Activated CD8-positive, alpha-beta memory T cell treated with anti-CD3 and anti-CD28 coated beads, Interleukin-2, amount 10 ng/mL, durations not matched to agents 7 days and 5 days (primary cell): ENCODE measurements at regions of chr2 and their contacts with region 1.

Region 1: DNA sequence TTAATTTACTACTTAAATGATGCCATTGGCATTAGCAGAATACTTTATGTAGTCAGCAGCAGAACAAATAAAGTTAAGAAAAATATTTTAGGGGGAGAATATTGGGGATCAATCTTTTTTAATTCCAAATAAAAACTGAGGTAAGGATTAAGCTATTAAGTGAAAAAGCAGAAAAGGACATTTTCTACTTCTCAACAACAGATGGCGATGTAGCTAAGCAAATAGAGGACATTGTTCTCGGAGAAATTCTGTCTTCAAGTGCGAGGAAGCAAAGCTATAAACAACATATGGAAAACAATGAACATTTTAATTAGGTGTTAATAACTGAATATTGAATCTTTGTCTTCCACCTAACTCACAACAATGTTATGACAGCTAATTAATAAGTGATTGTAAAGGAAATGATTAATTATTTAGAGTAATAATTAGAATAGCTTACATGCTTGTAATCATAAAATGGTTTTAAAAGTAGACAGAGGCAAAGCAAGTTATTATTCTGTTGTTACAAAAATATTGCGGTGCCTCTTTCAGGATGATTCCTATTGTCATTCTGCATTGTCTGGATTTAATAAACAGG is 32.9 kb upstream of the CCDC93 start:
- DNase-seq: no peak
- ATAC-seq: no peak
- H3K4me3 Mint-ChIP-seq: no peak overlapping the region
- H3K27ac Mint-ChIP-seq: no peak overlapping the region
- H3K4me1 Mint-ChIP-seq: peaks cover 11% of the 10 kb centered on the region
- H3K27me3 Mint-ChIP-seq: peaks cover 45% of the 10 kb centered on the region

Region 2: DNA sequence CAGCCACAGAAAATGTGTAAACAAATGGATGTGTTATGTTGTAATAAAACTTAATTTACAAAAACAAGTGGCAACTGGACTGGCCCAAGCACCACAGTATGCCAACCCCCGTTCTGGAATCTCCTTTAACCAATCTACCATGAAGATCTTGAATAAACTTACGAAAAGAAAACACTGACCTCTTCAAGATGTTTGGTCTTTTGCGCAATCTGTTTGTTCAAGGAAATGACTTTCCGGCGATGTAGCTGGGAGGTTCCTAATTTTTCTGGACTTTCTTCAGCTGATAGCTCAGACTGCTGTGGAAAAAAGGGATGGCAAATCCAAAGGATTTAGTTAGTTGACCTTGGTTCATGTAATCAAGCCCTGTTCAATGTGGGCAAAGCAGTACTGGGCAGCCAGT is 88.5 kb before region 1 on chr2:
- CTCF ChIA-PET with region 1: no interaction called
- DNase-seq: no peak
- ATAC-seq: no peak
- H3K4me3 Mint-ChIP-seq: no peak overlapping the region
- H3K27ac Mint-ChIP-seq: no peak overlapping the region
- H3K4me1 Mint-ChIP-seq: no peaks in the 10 kb centered on the region
- H3K27me3 Mint-ChIP-seq: no peaks in the 10 kb centered on the region

Region 3: GRCh38 chr2:118032169-118033013 is 14.3 kb before region 1 on chr2:
- CTCF ChIA-PET with region 1: interaction called, 13 read pairs
- DNase-seq: peak; percentile 62
- ATAC-seq: peak; percentile 67
- H3K4me3 Mint-ChIP-seq: no peak overlapping the region
- H3K27ac Mint-ChIP-seq: no peak overlapping the region
- H3K4me1 Mint-ChIP-seq: peaks cover 2% of the 10 kb centered on the region
- H3K27me3 Mint-ChIP-seq: peaks cover 60% of the 10 kb centered on the region

Region 4: DNA sequence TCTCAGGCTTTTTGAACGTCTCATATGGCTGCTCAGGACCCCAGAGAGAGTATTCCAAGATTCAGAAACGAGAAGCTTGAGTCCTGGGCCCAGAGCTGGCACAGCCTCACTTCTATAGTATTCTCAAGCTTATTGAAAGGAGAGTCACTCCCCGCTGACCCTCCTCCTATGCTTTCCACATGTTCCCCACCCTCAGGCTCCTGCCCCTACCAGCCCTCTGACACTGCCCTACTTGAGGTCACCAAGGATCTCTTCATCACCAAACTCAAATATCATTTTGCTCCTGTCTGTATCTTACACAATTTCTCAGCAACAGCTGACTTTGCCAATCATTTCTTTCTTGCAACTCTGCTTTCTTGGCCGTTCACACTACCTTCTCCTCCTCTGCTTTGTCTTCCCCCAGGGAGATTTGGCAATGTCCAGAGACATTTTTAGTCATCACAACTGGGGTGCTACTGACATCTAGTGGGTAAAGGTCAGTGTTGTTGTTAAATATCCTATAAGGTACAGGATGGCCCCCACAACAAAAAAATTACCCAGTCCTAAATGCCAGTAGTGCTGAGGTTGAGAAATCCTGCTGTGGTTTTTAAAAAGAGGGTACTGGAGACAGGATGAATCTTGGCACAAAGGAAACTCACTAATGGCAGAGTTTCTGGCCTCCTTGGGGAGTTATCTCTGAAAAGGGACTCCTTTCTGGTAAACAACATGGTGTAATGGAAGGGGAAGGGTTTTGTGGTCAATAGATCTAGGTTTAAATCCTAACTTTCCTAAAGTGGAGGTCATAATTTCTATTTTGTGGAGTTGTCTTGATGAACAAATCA is 14.6 kb after region 1 on chr2:
- CTCF ChIA-PET with region 1: interaction called, 23 read pairs
- DNase-seq: no peak
- ATAC-seq: no peak
- H3K4me3 Mint-ChIP-seq: no peak overlapping the region
- H3K27ac Mint-ChIP-seq: no peak overlapping the region
- H3K4me1 Mint-ChIP-seq: peaks cover 14% of the 10 kb centered on the region
- H3K27me3 Mint-ChIP-seq: peaks cover 46% of the 10 kb centered on the region

Region 5: DNA sequence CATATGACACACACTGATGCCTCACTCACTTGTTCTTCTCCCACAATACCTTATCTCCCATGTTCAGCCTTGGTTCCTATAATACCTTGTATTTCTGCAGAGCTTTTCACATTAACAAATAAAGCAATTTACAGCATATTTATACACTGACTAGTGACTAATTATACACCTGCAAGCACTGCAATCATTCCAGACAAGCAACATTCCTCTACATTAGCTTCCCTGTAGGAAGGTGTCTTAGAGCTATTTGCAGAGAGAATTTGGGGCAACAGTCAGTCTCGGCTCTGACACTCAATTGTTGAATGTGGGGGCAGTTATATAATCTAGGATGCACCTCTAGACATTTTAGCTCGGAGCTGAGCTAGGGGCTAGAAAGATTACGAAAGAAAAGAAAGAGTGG is 32.0 kb after region 1 on chr2:
- CTCF ChIA-PET with region 1: no interaction called
- DNase-seq: no peak
- ATAC-seq: no peak
- H3K4me3 Mint-ChIP-seq: no peak overlapping the region
- H3K27ac Mint-ChIP-seq: no peak overlapping the region
- H3K4me1 Mint-ChIP-seq: no peaks in the 10 kb centered on the region
- H3K27me3 Mint-ChIP-seq: peaks cover 55% of the 10 kb centered on the region

Region 6: GRCh38 chr2:118855451-118856279 is 808.9 kb after region 1 on chr2:
- CTCF ChIA-PET with region 1: interaction called, 17 read pairs
- DNase-seq: peak; percentile 79
- ATAC-seq: peak; percentile 84
- H3K4me3 Mint-ChIP-seq: no peak overlapping the region
- H3K27ac Mint-ChIP-seq: no peak overlapping the region
- H3K4me1 Mint-ChIP-seq: peaks cover 12% of the 10 kb centered on the region
- H3K27me3 Mint-ChIP-seq: peaks cover 95% of the 10 kb centered on the region